ENCODE measurements at regions of chr5 and their contacts with region 1.

Region 1: DNA sequence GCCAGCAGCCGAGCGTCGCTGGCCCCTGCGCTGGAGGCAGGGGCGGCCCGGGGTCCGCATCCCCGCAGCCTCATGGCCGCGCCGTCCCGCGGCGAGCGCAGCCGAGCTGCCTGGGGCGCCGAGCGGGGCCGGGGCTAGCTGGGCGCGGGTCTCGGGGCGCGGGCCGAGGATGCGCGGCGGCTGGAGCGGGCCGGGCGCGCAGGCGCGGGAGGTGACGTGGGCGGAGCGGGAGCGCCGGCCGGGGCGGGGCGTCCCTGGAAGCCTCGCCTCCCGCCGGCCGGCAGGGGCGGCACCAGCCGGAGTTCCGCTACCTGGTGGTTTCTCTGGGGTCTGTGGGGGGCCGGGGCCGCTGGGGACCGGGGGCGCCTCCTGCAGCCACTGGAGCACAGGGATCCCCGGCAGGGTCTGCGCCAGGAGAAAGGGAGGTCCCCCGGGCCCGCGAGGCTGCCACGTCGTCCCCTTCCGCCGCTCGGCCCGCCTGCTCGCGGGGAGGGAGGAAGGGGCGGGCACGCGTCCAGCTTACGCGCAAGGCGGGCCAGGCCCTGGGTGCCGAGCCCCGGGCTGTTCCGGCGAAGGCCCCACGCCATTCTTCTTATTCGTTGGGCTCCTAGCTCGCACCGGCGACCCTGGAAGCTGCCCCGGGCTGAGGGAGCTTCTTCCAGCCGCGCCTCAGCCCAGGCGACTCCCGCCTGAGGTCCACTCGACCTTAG is at the start of gene LPCAT1:
- DNase-seq: peak; percentile 88
- ATAC-seq: peak; percentile 85
- H3K4me3 ChIP-seq: peak within 1 kb of the TSS; percentile 32 to 74 (median 64)
- H3K4me3 Mint-ChIP-seq: peak within 1 kb of the TSS; percentile 88
- H3K27ac ChIP-seq: peak within 1 kb of the TSS; percentile 76 to 90
- H3K27ac Mint-ChIP-seq: peak within 1 kb of the TSS; percentile 91
- H3K4me1 ChIP-seq: peaks cover 39 to 53% of the 10 kb centered on the region in 2 donors
- H3K4me1 Mint-ChIP-seq: peaks cover 53% of the 10 kb centered on the region
- H3K27me3 ChIP-seq: no peaks in the 10 kb centered on the region
- H3K27me3 Mint-ChIP-seq: no peaks in the 10 kb centered on the region
- CTCF ChIP-seq: no peak
- total RNA-seq, gene LPCAT1: 152 and 159 TPM in 2 replicates

Region 2: GRCh38 chr5:1494780-1495524 is 29.0 kb before region 1 on chr5:
- CTCF ChIA-PET with region 1: no interaction called
- POLR2A ChIA-PET with region 1: interaction called, 4 read pairs
- intact Hi-C with region 1: loop called (anchors 2 kb)
- DNase-seq: peak; percentile 91
- ATAC-seq: peak; percentile 72
- H3K4me3 ChIP-seq: peak overlapping the region in 4 of 5 experiments; percentile 41 to 60 (median 55)
- H3K4me3 Mint-ChIP-seq: peak overlapping the region; percentile 87
- H3K27ac ChIP-seq: peak overlapping the region; percentile 95 to 96
- H3K27ac Mint-ChIP-seq: peak overlapping the region; percentile 98
- H3K4me1 ChIP-seq: peaks cover 90 to 99% of the 10 kb centered on the region in 2 donors
- H3K4me1 Mint-ChIP-seq: peaks cover 99% of the 10 kb centered on the region
- H3K27me3 ChIP-seq: no peaks in the 10 kb centered on the region
- H3K27me3 Mint-ChIP-seq: no peaks in the 10 kb centered on the region
- CTCF ChIP-seq: peak; percentile 16

Measured in B cell (primary cell).